ENCODE measurements at regions of chr1 and their contacts with region 1.

Region 1: DNA sequence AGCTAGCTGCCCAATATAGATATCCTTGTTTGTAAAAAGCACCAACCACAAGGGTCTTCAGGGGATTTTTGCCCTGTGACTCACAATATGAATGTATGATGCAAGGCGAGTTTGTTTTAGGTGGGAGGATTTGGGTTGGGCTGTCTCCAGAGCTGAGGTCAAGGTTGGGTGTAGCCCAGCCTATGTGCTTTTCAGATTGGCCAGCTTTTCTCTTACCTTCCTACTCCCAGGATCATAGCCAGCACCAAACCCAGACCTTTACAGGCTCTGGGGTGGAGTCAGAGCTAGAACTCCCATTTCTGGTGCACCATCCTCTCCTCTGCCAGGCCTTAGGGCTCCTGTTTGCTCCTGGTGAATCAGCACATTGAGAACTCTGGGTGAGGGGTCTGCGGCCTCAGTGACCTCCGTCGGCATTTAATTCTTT is 55.6 kb upstream of the GCLM start:
- DNase-seq: peak; percentile 90 to 100
- H3K4me3 ChIP-seq: peak overlapping the region; percentile 43
- H3K27ac ChIP-seq: peak overlapping the region; percentile 99
- H3K4me1 ChIP-seq: peaks cover 99% of the 10 kb centered on the region
- H3K27me3 ChIP-seq: no peaks in the 10 kb centered on the region
- CTCF ChIP-seq: no peak

Region 2: GRCh38 chr1:93878889-93879586 is 85.8 kb before region 1 on chr1 and contains the start of gene DNTTIP2:
- CTCF ChIA-PET with region 1: no interaction called
- POLR2A ChIA-PET with region 1: interaction called, 12 read pairs
- intact Hi-C with region 1: no loop called
- DNase-seq: peak; percentile 88 to 89
- H3K4me3 ChIP-seq: peak within 1 kb of the TSS; percentile 85
- H3K27ac ChIP-seq: peak within 1 kb of the TSS; percentile 95
- H3K4me1 ChIP-seq: peaks cover 29% of the 10 kb centered on the region
- H3K27me3 ChIP-seq: no peaks in the 10 kb centered on the region
- CTCF ChIP-seq: no peak
- total RNA-seq, gene DNTTIP2: 85.7 and 93.4 TPM in 2 replicates

Region 3: GRCh38 chr1:93976291-93976690 is 11.5 kb after region 1 on chr1:
- CTCF ChIA-PET with region 1: interaction called, 3 read pairs
- POLR2A ChIA-PET with region 1: interaction called, 11 read pairs
- intact Hi-C with region 1: no loop called
- DNase-seq: no peak
- H3K4me3 ChIP-seq: no peak overlapping the region
- H3K27ac ChIP-seq: no peak overlapping the region
- H3K4me1 ChIP-seq: peaks cover 15% of the 10 kb centered on the region
- H3K27me3 ChIP-seq: no peaks in the 10 kb centered on the region
- CTCF ChIP-seq: no peak

Region 4: GRCh38 chr1:94025383-94026340 is 60.9 kb after region 1 on chr1:
- CTCF ChIA-PET with region 1: interaction called, 8 read pairs
- POLR2A ChIA-PET with region 1: interaction called, 116 read pairs
- intact Hi-C with region 1: loop called (anchors 1 kb)
- DNase-seq: peak; percentile 54 to 77
- H3K4me3 ChIP-seq: no peak overlapping the region
- H3K27ac ChIP-seq: no peak overlapping the region
- H3K4me1 ChIP-seq: peaks cover 49% of the 10 kb centered on the region
- H3K27me3 ChIP-seq: no peaks in the 10 kb centered on the region
- CTCF ChIP-seq: peak; percentile 91

Region 5: DNA sequence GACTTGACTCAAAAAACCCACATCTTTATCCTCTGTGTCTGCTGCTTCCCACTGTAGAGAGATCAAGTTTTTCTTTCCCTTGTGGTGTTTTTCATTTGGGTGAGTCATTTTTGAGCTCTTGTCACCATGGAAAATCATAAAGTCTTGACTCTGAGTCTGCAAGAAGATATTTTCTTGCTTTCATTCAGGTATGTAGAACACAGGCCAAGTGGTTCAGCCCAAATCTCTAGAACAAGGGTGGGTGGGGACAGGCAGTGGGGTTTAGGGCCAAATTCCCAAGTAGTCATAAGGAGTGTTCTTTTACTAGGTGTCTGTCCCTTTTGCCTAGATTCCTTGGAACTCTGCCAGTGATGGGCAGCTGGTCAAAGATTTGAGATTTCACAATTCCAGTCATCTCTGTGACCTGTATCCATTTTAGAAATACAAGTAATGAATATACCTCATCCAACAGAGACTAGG is 294.1 kb after region 1 on chr1:
- CTCF ChIA-PET with region 1: no interaction called
- POLR2A ChIA-PET with region 1: interaction called, 3 read pairs
- intact Hi-C with region 1: loop called (anchors 10 kb)
- DNase-seq: peak; percentile 91 to 100
- H3K4me3 ChIP-seq: peak overlapping the region; percentile 13; the same call in 1 of the 2 replicates
- H3K27ac ChIP-seq: peak overlapping the region; percentile 98
- H3K4me1 ChIP-seq: peaks cover 74% of the 10 kb centered on the region
- H3K27me3 ChIP-seq: no peaks in the 10 kb centered on the region
- CTCF ChIP-seq: no peak

Region 6: DNA sequence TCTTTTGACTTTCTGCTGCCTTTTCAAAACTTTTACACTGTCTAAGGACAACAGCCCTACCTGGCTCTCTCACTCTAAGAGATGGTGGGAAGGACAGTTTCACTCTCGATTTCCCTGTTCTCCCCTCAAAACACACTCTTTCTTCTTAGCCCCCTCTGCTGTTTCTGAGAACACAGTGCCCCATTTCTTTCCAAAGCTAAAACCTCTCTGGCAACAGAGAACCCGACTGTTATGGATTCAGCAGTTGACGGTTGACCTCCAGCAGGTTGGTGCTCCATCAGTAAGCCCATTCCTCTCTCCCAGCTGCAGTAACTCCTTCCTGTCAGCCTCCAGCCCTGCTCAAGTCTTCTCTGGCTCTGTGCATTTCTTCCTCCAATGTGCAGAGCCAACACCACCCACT is 365.2 kb after region 1 on chr1:
- CTCF ChIA-PET with region 1: interaction called, 8 read pairs
- POLR2A ChIA-PET with region 1: interaction called, 3 read pairs
- intact Hi-C with region 1: loop called (anchors 1 kb)
- DNase-seq: no peak
- H3K4me3 ChIP-seq: no peak overlapping the region
- H3K27ac ChIP-seq: no peak overlapping the region
- H3K4me1 ChIP-seq: peaks cover 78% of the 10 kb centered on the region
- H3K27me3 ChIP-seq: no peaks in the 10 kb centered on the region
- CTCF ChIP-seq: peak; percentile 30; the same call in 1 of the 2 replicates

Region 7: GRCh38 chr1:94622757-94623156 is 658.0 kb after region 1 on chr1:
- CTCF ChIA-PET with region 1: no interaction called
- POLR2A ChIA-PET with region 1: interaction called, 4 read pairs
- intact Hi-C with region 1: loop called (anchors 10 kb)
- DNase-seq: peak; percentile 95 to 99
- H3K4me3 ChIP-seq: peak overlapping the region; percentile 41; the same call in 1 of the 2 replicates
- H3K27ac ChIP-seq: peak overlapping the region; percentile 99
- H3K4me1 ChIP-seq: peaks cover 72% of the 10 kb centered on the region
- H3K27me3 ChIP-seq: no peaks in the 10 kb centered on the region
- CTCF ChIP-seq: no peak